ENCODE measurements at regions of chr5 and their contacts with region 1.

Region 1: DNA sequence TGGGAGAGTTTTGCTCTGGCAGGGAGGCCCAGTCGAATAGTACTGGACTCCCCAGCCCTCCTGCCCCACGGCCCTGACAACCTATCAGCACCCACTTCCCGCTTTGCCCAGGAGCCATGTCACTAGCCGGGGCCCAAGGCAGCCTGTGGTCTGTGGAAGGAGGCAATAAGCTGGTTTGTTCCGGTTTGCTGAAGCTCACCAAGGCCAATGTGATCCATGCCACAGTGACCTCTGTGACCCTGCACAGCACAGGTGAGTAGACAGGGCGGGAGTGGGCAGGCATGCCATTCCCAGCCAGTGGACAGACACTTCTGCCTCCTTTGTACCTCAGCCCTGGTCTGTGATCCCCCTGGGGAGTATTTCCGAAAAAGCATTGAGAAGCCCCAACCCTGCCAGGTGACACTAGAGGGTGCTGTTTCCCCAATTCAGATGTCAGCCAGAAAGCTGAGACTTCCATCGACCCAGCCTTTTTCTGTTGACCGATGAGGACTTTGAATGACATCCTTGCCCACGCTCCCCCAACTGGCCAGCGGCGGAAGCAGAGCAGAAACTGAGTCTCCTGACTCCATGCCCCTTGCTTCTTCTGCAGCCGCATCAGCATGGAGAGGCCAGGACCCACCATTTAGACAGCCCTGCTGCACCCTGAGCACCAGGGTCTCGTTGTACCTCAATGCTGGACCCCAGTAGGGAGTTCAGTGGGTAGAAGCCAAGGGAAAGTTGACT is 9.6 kb downstream of the PCYOX1L start:
- DNase-seq: peak in 1 of 2 donors; percentile 84
- H3K4me3 ChIP-seq: no peak overlapping the region
- H3K27ac ChIP-seq: peak overlapping the region; percentile 43 to 56
- H3K4me1 ChIP-seq: peaks cover 0 to 38% (median 25%) of the 10 kb centered on the region in 4 donors
- H3K27me3 ChIP-seq: no peaks in the 10 kb centered on the region
- CTCF ChIP-seq: peak; percentile 85 to 87

Region 2: GRCh38 chr5:149177911-149178565 is 189.4 kb before region 1 on chr5:
- intact Hi-C with region 1: no loop called
- DNase-seq: no peak
- H3K4me3 ChIP-seq: no peak overlapping the region
- H3K27ac ChIP-seq: peak overlapping the region in 1 of 2 donors; percentile 8
- H3K4me1 ChIP-seq: peaks cover 0 to 46% (median 2%) of the 10 kb centered on the region in 4 donors
- H3K27me3 ChIP-seq: no peaks in the 10 kb centered on the region
- CTCF ChIP-seq: no peak

Region 3: GRCh38 chr5:149442563-149443182 is 75.3 kb after region 1 on chr5:
- intact Hi-C with region 1: loop called (anchors 5 kb)
- DNase-seq: peak; percentile 71 to 86
- H3K4me3 ChIP-seq: no peak overlapping the region
- H3K27ac ChIP-seq: peak overlapping the region; percentile 50 to 64
- H3K4me1 ChIP-seq: peaks cover 4 to 33% (median 19%) of the 10 kb centered on the region in 4 donors
- H3K27me3 ChIP-seq: no peaks in the 10 kb centered on the region
- CTCF ChIP-seq: peak; percentile 90 to 96

Measured in tibial artery (tissue), 4 donors.